ENCODE measurements at regions of chr4 and their contacts with region 1.

Region 1: GRCh38 chr4:25938787-25939186 is 24.8 kb downstream of the SMIM20 start:
- DNase-seq: no peak
- H3K4me3 Mint-ChIP-seq: peak overlapping the region; percentile 36
- H3K27ac Mint-ChIP-seq: peak overlapping the region; percentile 91
- H3K4me1 Mint-ChIP-seq: peaks cover 37% of the 10 kb centered on the region
- H3K27me3 Mint-ChIP-seq: peaks cover 4% of the 10 kb centered on the region

Region 2: DNA sequence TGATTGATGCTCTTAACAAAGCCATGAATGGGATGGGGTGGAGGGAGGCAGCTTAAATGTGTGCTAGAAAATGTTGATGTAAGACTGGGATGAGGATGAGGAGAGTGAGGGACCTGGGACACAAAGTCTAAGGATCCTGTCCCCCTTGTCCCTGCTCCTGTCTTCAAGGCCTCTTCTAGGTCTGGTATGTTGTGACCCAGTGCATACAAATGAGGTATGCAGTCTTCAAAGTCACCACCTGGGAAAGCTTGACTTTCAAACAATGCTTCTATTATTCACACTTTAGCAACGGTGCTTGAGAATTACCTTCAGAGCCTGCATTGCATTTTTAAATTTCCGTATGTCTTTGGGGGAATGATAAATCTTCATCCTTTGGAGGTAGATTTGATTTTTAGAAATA is 371.5 kb before region 1 on chr4:
- intact Hi-C with region 1: no loop called
- DNase-seq: no peak
- H3K4me3 Mint-ChIP-seq: no peak overlapping the region
- H3K27ac Mint-ChIP-seq: no peak overlapping the region
- H3K4me1 Mint-ChIP-seq: no peaks in the 10 kb centered on the region
- H3K27me3 Mint-ChIP-seq: peaks cover 2% of the 10 kb centered on the region

Region 3: GRCh38 chr4:25862411-25863346 is 76.1 kb before region 1 on chr4 and contains the start of gene SEL1L3:
- intact Hi-C with region 1: loop called (anchors 2 kb)
- DNase-seq: peak; percentile 37
- H3K4me3 Mint-ChIP-seq: peak within 1 kb of the TSS; percentile 99
- H3K27ac Mint-ChIP-seq: peak within 1 kb of the TSS; percentile 99
- H3K4me1 Mint-ChIP-seq: peaks cover 42% of the 10 kb centered on the region
- H3K27me3 Mint-ChIP-seq: no peaks in the 10 kb centered on the region
- total RNA-seq, gene SEL1L3: 36.0 and 37.1 TPM in 2 replicates

Region 4: GRCh38 chr4:25993395-25994185 is 54.8 kb after region 1 on chr4:
- intact Hi-C with region 1: loop called (anchors 2 kb)
- DNase-seq: no peak
- H3K4me3 Mint-ChIP-seq: no peak overlapping the region
- H3K27ac Mint-ChIP-seq: no peak overlapping the region
- H3K4me1 Mint-ChIP-seq: peaks cover 13% of the 10 kb centered on the region
- H3K27me3 Mint-ChIP-seq: peaks cover 2% of the 10 kb centered on the region

Region 5: DNA sequence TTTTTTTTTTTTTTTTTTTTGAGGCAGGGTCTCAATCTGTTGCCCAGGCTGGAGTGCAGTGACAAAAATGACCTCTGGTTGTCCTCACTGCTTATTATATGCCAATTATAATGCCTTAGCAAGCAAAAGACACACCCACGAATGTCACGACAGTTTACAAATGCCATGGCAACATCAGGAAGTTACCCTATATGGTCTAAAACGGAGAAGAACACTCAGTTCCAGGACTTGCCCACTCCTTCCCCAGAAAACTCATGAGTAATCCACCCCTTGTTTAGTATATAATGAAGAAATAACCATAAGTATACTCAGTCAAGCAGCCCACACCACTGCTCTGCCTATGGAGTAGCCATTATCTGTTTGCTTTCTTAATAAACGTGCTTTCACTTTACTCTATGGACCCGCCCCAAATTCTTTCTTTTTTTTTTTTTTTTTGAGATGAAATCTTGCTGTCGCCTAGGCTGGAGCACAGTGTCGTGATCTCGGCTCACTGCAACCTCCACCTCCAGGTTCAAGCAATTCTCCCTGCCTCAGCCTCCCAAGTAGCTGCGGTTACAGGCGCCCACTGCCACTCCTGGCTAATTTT is 81.4 kb after region 1 on chr4:
- intact Hi-C with region 1: loop called (anchors 2 kb)
- DNase-seq: no peak
- H3K4me3 Mint-ChIP-seq: no peak overlapping the region
- H3K27ac Mint-ChIP-seq: peak overlapping the region; percentile 18
- H3K4me1 Mint-ChIP-seq: peaks cover 21% of the 10 kb centered on the region
- H3K27me3 Mint-ChIP-seq: peaks cover 9% of the 10 kb centered on the region

Region 6: GRCh38 chr4:26307037-26307800 is 368.4 kb after region 1 on chr4:
- intact Hi-C with region 1: loop called (anchors 5 kb)
- DNase-seq: no peak
- H3K4me3 Mint-ChIP-seq: peak overlapping the region; percentile 23
- H3K27ac Mint-ChIP-seq: peak overlapping the region; percentile 88
- H3K4me1 Mint-ChIP-seq: peaks cover 36% of the 10 kb centered on the region
- H3K27me3 Mint-ChIP-seq: no peaks in the 10 kb centered on the region

Region 7: DNA sequence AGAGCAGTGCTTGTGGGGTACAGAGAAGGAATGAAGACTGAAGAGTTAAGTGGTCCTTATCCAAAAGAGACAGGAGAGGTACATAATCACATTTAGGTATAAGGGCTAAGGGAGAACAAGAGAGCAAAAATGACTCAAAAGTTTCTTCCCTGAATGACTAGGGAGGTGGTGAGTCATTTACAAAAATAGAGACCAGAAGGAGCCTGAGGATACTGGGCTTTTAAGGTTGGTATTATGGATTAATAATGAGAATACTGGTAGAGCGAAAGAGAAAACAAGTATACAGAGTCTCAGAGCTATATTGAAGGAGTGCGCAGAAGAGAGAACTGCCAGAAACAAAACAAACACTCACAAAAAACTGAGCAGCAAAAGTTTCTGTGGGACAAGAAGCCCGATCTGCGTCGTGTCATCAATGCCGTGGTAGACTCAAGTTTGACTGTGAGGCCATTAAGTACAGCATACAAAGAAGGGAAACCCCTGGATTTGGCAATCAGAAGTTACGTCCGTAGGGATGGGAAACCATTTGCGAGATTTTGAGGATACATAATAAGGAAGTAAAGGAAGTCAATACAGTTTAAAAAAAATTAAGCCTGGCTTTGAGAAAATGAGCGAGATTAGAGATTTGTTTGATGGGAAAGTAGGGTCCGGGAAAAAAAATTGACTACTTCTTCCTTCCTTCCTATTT is 792.7 kb after region 1 on chr4:
- intact Hi-C with region 1: loop called (anchors 5 kb)
- DNase-seq: no peak
- H3K4me3 Mint-ChIP-seq: no peak overlapping the region
- H3K27ac Mint-ChIP-seq: no peak overlapping the region
- H3K4me1 Mint-ChIP-seq: peaks cover 11% of the 10 kb centered on the region
- H3K27me3 Mint-ChIP-seq: peaks cover 3% of the 10 kb centered on the region

Region 8: GRCh38 chr4:27000820-27001219 is 1062.0 kb after region 1 on chr4:
- intact Hi-C with region 1: loop called (anchors 5 kb)
- DNase-seq: no peak
- H3K4me3 Mint-ChIP-seq: no peak overlapping the region
- H3K27ac Mint-ChIP-seq: no peak overlapping the region
- H3K4me1 Mint-ChIP-seq: peaks cover 48% of the 10 kb centered on the region
- H3K27me3 Mint-ChIP-seq: no peaks in the 10 kb centered on the region